ENCODE measurements at regions of chr3 and their contacts with region 1.

Region 1: DNA sequence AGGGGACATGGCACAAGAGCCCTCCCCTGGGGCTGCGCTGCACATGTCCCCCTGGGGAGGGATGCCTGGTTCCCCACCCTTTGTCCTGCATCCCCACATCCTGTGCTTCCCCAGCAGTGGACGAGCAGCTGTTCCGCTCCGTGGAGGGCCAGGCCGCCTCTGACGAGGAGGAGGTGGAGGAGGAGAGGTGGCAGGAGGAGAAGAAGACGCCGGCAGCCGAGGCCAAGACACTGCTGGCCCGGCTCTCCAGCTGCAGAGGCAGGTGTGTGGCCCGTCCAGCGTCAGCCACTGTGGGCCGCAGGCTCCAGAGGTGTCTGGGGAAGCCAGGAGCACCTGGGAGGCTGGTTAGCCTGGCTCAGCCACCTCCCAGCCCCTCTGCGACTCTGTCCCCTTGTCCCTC is 27.9 kb upstream of the GP9 start:
- DNase-seq: no peak
- H3K4me3 Mint-ChIP-seq: no peak overlapping the region
- H3K27ac Mint-ChIP-seq: no peak overlapping the region
- H3K4me1 Mint-ChIP-seq: peaks cover 17% of the 10 kb centered on the region
- H3K27me3 Mint-ChIP-seq: peaks cover 2% of the 10 kb centered on the region

Region 2: GRCh38 chr3:128906031-128906803 is 126.5 kb before region 1 on chr3:
- CTCF ChIA-PET with region 1: no interaction called
- POLR2A ChIA-PET with region 1: no interaction called
- DNase-seq: no peak
- H3K4me3 Mint-ChIP-seq: no peak overlapping the region
- H3K27ac Mint-ChIP-seq: no peak overlapping the region
- H3K4me1 Mint-ChIP-seq: no peaks in the 10 kb centered on the region
- H3K27me3 Mint-ChIP-seq: no peaks in the 10 kb centered on the region

Region 3: GRCh38 chr3:128956440-128956839 is 76.3 kb before region 1 on chr3:
- CTCF ChIA-PET with region 1: no interaction called
- POLR2A ChIA-PET with region 1: no interaction called
- DNase-seq: no peak
- H3K4me3 Mint-ChIP-seq: no peak overlapping the region
- H3K27ac Mint-ChIP-seq: no peak overlapping the region
- H3K4me1 Mint-ChIP-seq: no peaks in the 10 kb centered on the region
- H3K27me3 Mint-ChIP-seq: peaks cover 14% of the 10 kb centered on the region

Region 4: GRCh38 chr3:129016356-129016719 is 16.4 kb before region 1 on chr3:
- CTCF ChIA-PET with region 1: interaction called, 94 read pairs
- POLR2A ChIA-PET with region 1: no interaction called
- DNase-seq: peak; percentile 69
- H3K4me3 Mint-ChIP-seq: peak overlapping the region; percentile 70
- H3K27ac Mint-ChIP-seq: peak overlapping the region; percentile 98
- H3K4me1 Mint-ChIP-seq: peaks cover 37% of the 10 kb centered on the region
- H3K27me3 Mint-ChIP-seq: no peaks in the 10 kb centered on the region

Region 5: GRCh38 chr3:129316131-129317013 is 283.7 kb after region 1 on chr3:
- CTCF ChIA-PET with region 1: no interaction called
- POLR2A ChIA-PET with region 1: no interaction called
- DNase-seq: peak; percentile 91
- H3K4me3 Mint-ChIP-seq: peak overlapping the region; percentile 83
- H3K27ac Mint-ChIP-seq: peak overlapping the region; percentile 89
- H3K4me1 Mint-ChIP-seq: peaks cover 38% of the 10 kb centered on the region
- H3K27me3 Mint-ChIP-seq: no peaks in the 10 kb centered on the region